Motor neuron (in vitro differentiated cells): ENCODE measurements at regions of chr7 and their contacts with region 1.

Region 1: DNA sequence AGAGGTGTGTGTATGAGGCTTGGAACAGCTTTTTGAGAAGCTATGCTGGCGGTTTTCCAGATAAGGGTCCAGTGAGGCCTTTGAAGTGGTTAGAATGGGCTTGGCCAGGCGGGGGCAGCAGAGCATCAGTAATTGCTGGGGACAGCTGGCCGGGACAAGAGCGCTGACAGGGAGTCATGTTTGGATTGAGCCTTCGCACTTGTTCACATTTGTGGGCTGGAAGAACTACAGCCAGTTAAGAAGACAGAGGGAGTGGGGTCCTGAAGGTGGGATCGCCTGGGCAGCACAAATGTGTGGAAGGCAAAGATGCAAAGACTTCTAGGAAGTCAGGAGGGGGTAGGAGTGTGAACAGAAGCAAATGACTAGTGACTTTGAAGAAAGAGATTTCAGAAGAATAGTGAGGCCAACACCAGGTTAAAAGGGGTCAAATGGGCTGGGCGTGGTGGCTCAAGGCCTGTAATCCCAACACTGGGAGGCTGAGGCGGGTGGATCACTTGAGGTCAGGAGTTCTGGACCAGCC is 12.7 kb upstream of the SDHAF3 start:
- ATAC-seq: peak; percentile 97 to 100 (median 99)
- H3K4me3 ChIP-seq: no peak overlapping the region
- H3K27ac ChIP-seq: no peak overlapping the region
- H3K4me1 ChIP-seq: no peaks in the 10 kb centered on the region

Region 2: GRCh38 chr7:97179454-97180104 is 74.8 kb after region 1 on chr7:
- in situ Hi-C with region 1: loop called in 1 of 9 experiments (anchors 10 kb)
- ATAC-seq: peak in 4 of 8 experiments; percentile 41 to 72 (median 55)
- H3K4me3 ChIP-seq: no peak overlapping the region
- H3K27ac ChIP-seq: no peak overlapping the region
- H3K4me1 ChIP-seq: no peaks in the 10 kb centered on the region

Region 3: GRCh38 chr7:97200018-97200417 is 95.2 kb after region 1 on chr7:
- in situ Hi-C with region 1: no loop called
- ATAC-seq: no peak
- H3K4me3 ChIP-seq: no peak overlapping the region
- H3K27ac ChIP-seq: no peak overlapping the region
- H3K4me1 ChIP-seq: peaks cover 2 to 5% of the 10 kb centered on the region in 2 donors

Region 4: GRCh38 chr7:97845622-97846203 is 740.9 kb after region 1 on chr7:
- in situ Hi-C with region 1: loop called in 6 of 9 experiments (anchors 10 to 25 kb)
- ATAC-seq: peak in 3 of 8 experiments; percentile 29 to 70 (median 30)
- H3K4me3 ChIP-seq: no peak overlapping the region
- H3K27ac ChIP-seq: no peak overlapping the region
- H3K4me1 ChIP-seq: no peaks in the 10 kb centered on the region